ENCODE measurements at regions of chr7 and their contacts with region 1.

Region 1: DNA sequence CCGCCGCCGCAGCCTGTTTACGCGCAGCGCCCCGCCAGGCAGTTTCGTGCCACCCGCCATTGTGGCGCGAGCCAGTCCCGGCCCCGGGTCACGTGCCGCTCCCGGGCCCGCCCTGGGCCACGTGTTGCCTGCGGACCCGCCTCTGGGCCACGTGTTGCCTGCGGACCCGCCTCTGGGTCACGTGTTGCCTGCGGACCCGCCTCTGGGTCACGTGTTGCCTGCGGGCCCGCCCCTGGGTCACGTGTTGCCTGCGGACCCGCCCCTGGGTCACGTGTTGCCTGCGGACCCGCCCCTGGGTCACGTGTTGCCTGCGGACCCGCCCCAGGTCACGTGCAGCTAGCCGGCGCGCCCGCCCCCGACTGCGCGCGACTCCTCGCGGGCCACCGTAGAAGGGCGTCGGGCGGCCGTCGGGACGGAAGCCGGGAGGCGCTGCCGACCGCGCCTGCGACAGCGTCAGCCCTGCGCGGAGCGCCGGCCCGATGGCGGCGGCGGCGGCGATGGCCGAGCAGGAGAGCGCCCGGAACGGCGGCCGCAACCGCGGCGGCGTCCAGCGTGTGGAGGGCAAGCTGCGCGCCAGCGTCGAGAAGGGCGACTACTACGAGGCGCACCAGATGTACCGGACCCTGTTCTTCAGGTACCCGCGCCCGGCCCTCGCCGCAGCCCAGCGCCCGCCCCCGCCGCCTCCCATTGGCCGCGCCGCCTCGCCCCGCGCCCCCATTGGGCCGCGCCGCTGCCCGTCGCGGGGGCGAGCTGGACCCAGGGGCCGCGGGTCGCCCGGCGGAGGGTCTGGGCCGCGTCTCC is at the start of gene GET4:
- DNase-seq: peak; percentile 97
- H3K4me3 Mint-ChIP-seq: peak within 1 kb of the TSS; percentile 96
- H3K27ac Mint-ChIP-seq: peak within 1 kb of the TSS; percentile 82
- H3K4me1 Mint-ChIP-seq: peaks cover 41% of the 10 kb centered on the region
- H3K27me3 Mint-ChIP-seq: no peaks in the 10 kb centered on the region
- total RNA-seq, gene GET4: 19.3 to 20.2 TPM

Region 2: DNA sequence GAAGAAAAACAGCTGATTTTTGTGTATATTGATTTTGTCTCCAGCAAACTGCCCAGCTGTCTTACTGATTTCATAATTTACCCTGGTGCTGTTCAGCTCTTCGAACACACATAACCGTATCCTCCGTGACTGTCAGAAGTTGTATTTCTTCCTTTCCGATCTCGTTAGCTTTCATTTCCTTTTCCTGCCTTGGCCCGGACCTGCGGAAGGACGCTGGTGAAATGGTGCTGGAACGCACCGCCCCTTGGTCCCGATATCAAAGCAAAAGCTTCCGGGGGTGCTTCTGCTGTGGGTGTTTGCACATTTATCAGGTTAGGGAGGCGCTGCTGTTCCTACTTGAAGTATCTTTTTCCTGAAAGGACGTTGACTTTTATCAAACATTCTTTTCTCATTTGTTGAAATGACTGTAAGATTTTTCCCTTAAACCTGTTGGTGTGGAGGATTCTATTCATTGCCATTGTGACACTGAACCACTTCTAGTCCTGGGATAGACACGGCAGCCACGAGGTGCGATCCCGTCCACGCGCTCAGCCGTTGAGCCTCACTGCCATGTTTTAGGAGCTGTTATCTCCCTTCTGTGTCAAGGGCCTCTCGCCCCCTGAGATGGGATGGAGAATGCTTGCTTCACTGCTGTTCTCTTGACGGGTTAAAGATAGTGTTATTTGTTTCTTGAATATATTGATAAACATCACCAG is 513.8 kb before region 1 on chr7:
- CTCF ChIA-PET with region 1: no interaction called
- intact Hi-C with region 1: loop called (anchors 2 kb)
- DNase-seq: peak; percentile 69
- H3K4me3 Mint-ChIP-seq: peak overlapping the region; percentile 67
- H3K27ac Mint-ChIP-seq: peak overlapping the region; percentile 79
- H3K4me1 Mint-ChIP-seq: peaks cover 66% of the 10 kb centered on the region
- H3K27me3 Mint-ChIP-seq: no peaks in the 10 kb centered on the region

Region 3: GRCh38 chr7:636396-636795 is 240.0 kb before region 1 on chr7:
- CTCF ChIA-PET with region 1: no interaction called
- intact Hi-C with region 1: no loop called
- DNase-seq: peak; percentile 73
- H3K4me3 Mint-ChIP-seq: no peak overlapping the region
- H3K27ac Mint-ChIP-seq: no peak overlapping the region
- H3K4me1 Mint-ChIP-seq: peaks cover 21% of the 10 kb centered on the region
- H3K27me3 Mint-ChIP-seq: no peaks in the 10 kb centered on the region

Region 4: DNA sequence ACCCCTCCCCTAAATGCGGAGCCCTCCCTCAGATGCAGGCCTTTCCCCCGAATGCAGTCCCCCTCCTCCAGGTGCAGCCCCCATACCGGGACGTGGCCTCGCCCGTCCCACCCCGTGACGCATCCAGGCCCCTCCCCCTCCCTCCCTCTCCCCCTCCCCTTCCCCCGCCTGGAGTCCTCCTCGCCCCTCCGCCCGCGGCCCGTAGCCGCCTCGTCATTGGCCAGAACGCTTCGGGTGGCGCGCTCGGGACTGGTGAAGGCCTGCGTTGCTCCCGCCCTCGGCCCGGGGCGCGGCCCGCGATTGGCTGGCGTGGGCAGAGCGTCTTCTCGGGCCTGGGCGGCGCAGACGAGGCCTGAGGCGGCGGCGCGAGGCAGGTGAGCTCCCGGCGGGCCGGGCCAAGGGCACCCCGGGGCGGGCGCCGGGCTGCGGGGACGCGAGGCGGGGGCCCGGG is 60.0 kb before region 1 on chr7:
- CTCF ChIA-PET with region 1: interaction called, 6 read pairs
- intact Hi-C with region 1: loop called (anchors 1 kb)
- DNase-seq: peak; percentile 98
- H3K4me3 Mint-ChIP-seq: peak overlapping the region; percentile 81
- H3K27ac Mint-ChIP-seq: no peak overlapping the region
- H3K4me1 Mint-ChIP-seq: peaks cover 61% of the 10 kb centered on the region
- H3K27me3 Mint-ChIP-seq: peaks cover 5% of the 10 kb centered on the region

Region 5: DNA sequence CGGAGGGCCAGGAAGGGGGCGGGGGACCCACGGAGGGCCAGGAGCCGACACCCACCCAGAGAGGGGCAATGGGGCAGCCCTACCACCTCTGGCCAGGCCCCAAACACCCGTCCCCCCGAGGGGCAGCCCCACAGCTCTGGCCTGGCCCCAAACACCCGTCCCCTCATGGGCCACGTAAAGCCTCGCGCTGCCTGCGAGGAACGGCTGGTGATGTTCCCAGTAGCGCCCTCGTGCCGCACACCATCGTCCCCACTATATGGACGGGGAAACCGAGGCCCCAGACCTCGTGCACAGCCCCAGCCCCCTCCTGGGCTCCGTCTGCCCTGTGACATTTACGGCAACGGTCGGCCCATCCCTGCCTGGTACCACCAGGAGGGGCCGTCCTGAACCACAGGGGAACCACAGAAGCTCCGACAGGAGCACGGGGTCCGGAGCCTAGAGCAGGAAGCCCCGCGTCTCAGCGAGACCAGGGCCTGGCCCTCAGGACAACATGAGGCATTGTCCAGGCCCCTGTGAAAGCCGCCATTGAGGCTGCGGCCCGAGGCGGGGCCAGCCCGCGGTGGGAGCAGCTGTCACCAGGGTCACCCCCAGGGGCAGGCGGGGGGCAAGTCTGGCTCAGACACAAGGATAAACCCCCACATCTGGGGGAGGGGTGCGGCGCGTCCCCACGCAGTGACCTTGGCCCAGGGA is 35.6 kb after region 1 on chr7:
- CTCF ChIA-PET with region 1: no interaction called
- intact Hi-C with region 1: no loop called
- DNase-seq: no peak
- H3K4me3 Mint-ChIP-seq: no peak overlapping the region
- H3K27ac Mint-ChIP-seq: no peak overlapping the region
- H3K4me1 Mint-ChIP-seq: peaks cover 12% of the 10 kb centered on the region
- H3K27me3 Mint-ChIP-seq: no peaks in the 10 kb centered on the region

Region 6: DNA sequence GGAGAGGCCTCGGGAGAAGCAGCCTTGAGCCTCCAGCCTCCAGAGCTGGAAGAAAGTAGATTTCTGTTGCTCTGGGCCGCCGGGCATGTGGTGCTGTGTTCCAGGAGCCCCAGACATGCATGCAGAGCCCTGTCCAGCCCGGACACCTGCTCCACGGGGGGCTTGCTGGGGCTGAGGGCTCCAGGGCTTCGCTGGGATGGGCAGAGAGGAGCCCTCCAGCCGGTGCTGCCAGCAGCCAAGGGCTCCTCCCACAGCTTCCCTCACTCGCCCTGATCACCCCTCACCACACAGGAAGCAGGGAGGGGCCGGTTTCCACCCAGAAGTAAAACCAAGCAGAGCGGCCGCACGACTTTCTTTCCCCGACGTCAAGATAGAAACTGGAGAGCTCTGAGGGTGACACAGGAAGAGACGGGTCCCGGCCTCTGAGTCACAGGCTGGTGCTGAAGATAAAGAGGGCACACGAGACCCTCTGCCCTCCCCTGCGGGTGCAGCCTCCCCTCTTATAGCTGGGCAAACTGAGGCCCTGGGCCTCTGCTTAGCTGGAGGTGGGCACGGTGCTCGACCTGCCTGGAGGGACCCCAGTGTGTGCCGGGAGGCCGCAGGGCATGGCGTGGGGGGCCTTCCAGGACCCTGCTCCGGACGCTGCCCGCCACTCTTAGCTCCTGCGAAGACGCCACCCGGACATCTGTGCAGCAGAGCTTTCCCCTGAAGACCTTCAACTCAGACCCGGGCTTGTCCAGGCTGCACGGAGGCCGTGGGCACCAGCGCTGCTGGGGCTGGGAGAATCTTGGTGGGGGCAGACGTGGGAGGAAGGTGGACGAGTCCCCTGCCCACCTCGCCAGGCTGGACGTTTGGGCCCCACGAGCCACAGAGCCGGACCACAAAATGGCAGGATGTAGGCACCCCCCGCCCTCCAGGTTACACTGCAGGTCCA is 47.0 kb after region 1 on chr7:
- CTCF ChIA-PET with region 1: no interaction called
- intact Hi-C with region 1: loop called (anchors 1 kb)
- DNase-seq: peak; percentile 98
- H3K4me3 Mint-ChIP-seq: peak overlapping the region; percentile 78
- H3K27ac Mint-ChIP-seq: peak overlapping the region; percentile 91
- H3K4me1 Mint-ChIP-seq: peaks cover 43% of the 10 kb centered on the region
- H3K27me3 Mint-ChIP-seq: no peaks in the 10 kb centered on the region

Region 7: DNA sequence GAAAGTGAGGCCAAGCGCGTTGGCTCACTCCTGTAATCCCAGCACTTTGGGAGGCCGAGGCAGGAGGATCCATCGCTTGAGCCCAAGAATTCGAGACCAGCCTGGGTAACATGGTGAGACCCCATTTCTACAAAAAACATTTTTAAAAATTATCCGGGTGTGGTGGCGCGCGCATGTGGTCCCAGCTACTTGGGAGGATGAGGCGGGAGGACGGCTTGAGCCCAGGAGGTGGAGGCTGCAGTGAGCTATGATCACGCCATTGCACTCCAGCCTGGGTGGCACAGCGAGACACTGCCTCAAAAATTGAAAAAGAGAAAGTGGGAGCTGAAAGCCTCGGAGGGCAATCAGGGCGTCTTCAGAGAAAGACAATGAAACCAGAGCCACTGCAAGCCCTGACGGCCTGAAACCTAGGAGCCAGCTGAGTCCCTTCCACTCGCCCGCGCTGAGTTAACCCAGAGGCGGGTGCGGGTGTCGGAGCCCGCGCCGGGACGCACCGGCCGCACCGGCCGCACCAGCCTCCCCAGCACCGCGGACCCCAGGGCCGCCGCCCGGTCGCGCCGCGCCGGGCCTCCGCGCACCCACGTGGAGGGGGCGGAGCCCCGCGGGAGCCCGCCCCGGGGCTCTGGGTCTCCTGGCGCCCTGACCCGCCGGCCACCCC is 261.3 kb after region 1 on chr7:
- CTCF ChIA-PET with region 1: no interaction called
- intact Hi-C with region 1: loop called (anchors 1 kb)
- DNase-seq: no peak
- H3K4me3 Mint-ChIP-seq: peak overlapping the region; percentile 84
- H3K27ac Mint-ChIP-seq: peak overlapping the region; percentile 42
- H3K4me1 Mint-ChIP-seq: peaks cover 20% of the 10 kb centered on the region
- H3K27me3 Mint-ChIP-seq: no peaks in the 10 kb centered on the region

Region 8: DNA sequence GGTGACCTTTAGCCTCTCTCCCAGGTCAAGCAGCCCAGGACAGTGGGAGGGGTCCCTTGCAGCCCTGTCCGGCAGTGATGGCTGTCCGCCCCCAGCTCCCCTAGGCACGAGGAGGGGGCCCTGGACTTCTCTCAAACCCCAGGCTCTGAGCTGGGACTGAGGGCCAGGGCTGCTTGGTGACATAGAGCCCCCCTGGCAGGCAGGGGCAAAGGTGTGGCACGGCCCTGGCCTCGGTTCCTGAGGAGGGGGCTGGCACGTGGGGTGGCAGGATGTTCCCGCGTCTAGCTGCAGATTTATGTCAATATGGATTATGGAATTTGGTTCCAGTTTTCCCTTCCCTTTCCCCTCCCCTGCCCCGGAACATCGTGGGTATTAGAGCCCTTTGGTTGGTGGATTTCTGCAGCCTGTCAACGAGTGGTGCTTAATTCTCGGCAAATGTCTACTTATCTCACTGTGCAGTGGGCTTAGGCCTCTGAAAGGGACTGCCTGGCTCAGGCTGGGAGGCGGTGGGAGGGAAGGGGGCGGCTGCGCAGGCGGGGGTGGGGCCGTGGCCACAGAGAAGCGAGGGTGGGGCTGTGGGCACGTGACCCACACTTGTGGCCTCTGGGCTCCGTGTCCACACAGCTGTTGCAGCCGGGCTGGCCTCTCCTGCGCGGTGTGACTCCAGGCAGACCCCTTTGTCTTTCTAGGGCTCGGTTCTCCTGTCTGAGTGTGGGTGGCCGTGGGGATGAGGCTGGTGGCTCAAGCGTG is 375.6 kb after region 1 on chr7:
- CTCF ChIA-PET with region 1: no interaction called
- intact Hi-C with region 1: no loop called
- DNase-seq: no peak
- H3K4me3 Mint-ChIP-seq: no peak overlapping the region
- H3K27ac Mint-ChIP-seq: no peak overlapping the region
- H3K4me1 Mint-ChIP-seq: peaks cover 9% of the 10 kb centered on the region
- H3K27me3 Mint-ChIP-seq: peaks cover 52% of the 10 kb centered on the region

Measured in activated naive CD4-positive, alpha-beta T cell treated with anti-CD3 and anti-CD28 coated beads for 36 hours (primary cell).